PC-9 (cell line): ENCODE measurements at regions of chr14 and their contacts with region 1.

Region 1: GRCh38 chr14:57199921-57200320 is 68.8 kb downstream of the EXOC5 start:
- DNase-seq: no peak
- H3K4me3 ChIP-seq: no peak overlapping the region
- H3K27ac ChIP-seq: no peak overlapping the region
- H3K4me1 ChIP-seq: no peaks in the 10 kb centered on the region
- H3K27me3 ChIP-seq: no peaks in the 10 kb centered on the region
- CTCF ChIP-seq: no peak

Region 2: GRCh38 chr14:56044196-56044595 is 1155.7 kb before region 1 on chr14:
- CTCF ChIA-PET with region 1: no interaction called
- POLR2A ChIA-PET with region 1: no interaction called
- intact Hi-C with region 1: no loop called
- DNase-seq: no peak
- H3K4me3 ChIP-seq: no peak overlapping the region
- H3K27ac ChIP-seq: no peak overlapping the region
- H3K4me1 ChIP-seq: no peaks in the 10 kb centered on the region
- H3K27me3 ChIP-seq: no peaks in the 10 kb centered on the region
- CTCF ChIP-seq: no peak

Region 3: GRCh38 chr14:56524971-56525677 is 674.8 kb before region 1 on chr14:
- CTCF ChIA-PET with region 1: no interaction called
- POLR2A ChIA-PET with region 1: no interaction called
- intact Hi-C with region 1: no loop called
- DNase-seq: no peak
- H3K4me3 ChIP-seq: no peak overlapping the region
- H3K27ac ChIP-seq: no peak overlapping the region
- H3K4me1 ChIP-seq: no peaks in the 10 kb centered on the region
- H3K27me3 ChIP-seq: peaks cover 37% of the 10 kb centered on the region
- CTCF ChIP-seq: no peak

Region 4: GRCh38 chr14:56543436-56543835 is 656.5 kb before region 1 on chr14:
- CTCF ChIA-PET with region 1: interaction called, 11 read pairs
- POLR2A ChIA-PET with region 1: no interaction called
- intact Hi-C with region 1: no loop called
- DNase-seq: no peak
- H3K4me3 ChIP-seq: no peak overlapping the region
- H3K27ac ChIP-seq: no peak overlapping the region
- H3K4me1 ChIP-seq: no peaks in the 10 kb centered on the region
- H3K27me3 ChIP-seq: no peaks in the 10 kb centered on the region
- CTCF ChIP-seq: no peak

Region 5: DNA sequence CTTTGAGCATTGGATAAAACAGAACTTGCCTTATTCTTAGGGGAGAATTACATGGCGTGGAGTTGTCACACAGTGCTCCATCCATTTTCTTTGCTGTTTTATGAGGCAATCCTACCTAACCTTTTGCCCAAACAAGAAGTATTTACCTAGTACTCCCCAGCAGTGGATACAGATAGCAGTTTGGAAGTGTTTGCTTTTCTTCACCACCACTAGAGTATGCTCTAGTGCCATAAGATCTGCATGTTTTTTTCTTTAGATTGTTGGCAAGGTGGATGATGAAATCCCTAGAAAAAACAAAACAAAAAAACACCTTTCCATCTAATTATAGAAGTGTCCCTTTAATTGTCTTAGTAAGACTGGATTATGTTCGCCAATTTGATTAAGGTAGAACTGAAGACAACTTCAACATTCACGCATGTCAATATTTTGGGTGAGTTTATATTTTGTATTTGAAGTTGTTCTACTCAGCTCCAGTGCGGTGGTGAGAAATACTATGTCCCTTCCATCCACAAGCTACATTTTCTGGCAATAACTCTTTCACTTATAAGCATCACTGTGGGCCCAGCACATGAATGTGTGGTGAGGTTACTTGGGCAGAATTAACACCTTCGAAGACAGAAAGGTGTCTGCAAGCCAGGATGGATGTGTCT is 643.9 kb before region 1 on chr14:
- CTCF ChIA-PET with region 1: no interaction called
- POLR2A ChIA-PET with region 1: no interaction called
- intact Hi-C with region 1: loop called (anchors 5 kb)
- DNase-seq: peak in 1 of 2 experiments; percentile 71
- H3K4me3 ChIP-seq: no peak overlapping the region
- H3K27ac ChIP-seq: no peak overlapping the region
- H3K4me1 ChIP-seq: peaks cover 10% of the 10 kb centered on the region; the same call in 1 of the 2 replicates
- H3K27me3 ChIP-seq: no peaks in the 10 kb centered on the region
- CTCF ChIP-seq: peak; percentile 80